Activated CD4-positive, alpha-beta memory T cell treated with anti-CD3 and anti-CD28 coated beads for 36 hours (primary cell): ENCODE measurements at regions of chr17 and their contacts with region 1.

Region 1: DNA sequence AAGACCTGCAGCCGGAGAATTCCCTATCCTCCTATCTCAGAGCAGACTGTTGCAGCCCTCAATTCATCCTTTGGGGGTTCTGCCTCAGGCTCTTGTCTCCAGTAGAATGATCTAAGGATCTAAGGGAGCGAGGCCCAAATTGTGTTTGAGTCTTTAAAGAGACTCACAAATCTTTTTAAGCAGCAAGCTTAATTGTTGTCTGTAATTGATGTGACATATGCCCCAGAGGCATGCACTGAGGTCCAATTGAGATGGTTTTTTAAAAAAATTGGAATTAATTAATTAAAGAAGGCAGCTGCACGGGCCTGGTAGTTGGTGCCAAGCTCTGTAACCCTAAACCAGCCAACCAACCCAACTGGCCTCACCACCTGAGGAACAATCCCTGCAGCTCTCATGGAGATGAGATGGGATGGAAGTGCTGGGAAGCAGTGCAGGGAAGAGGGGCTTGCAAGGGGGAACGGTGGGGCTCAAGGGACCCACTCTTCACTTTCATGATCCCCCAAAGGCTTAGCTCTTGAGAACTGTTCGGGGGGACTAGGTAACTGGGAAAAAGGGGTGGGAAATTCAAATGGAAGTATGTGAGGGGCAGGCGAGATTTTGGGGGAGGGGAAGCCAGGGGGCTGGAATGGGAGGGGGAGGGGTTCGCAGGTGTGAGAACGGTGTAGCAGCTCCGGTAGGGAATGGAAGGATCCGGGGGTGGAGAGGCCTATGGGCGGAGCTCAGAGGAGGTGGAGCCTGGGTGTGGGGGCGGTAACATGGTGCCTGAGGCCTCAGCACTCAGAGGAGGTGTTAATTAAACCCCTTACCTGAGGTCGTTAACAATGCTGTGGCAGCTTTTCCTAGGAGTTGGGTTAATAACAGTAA is 9.2 kb upstream of the ZNF652 start:
- DNase-seq: no peak
- H3K4me3 Mint-ChIP-seq: no peak overlapping the region
- H3K27ac Mint-ChIP-seq: no peak overlapping the region
- H3K4me1 Mint-ChIP-seq: peaks cover 3% of the 10 kb centered on the region
- H3K27me3 Mint-ChIP-seq: no peaks in the 10 kb centered on the region

Region 2: DNA sequence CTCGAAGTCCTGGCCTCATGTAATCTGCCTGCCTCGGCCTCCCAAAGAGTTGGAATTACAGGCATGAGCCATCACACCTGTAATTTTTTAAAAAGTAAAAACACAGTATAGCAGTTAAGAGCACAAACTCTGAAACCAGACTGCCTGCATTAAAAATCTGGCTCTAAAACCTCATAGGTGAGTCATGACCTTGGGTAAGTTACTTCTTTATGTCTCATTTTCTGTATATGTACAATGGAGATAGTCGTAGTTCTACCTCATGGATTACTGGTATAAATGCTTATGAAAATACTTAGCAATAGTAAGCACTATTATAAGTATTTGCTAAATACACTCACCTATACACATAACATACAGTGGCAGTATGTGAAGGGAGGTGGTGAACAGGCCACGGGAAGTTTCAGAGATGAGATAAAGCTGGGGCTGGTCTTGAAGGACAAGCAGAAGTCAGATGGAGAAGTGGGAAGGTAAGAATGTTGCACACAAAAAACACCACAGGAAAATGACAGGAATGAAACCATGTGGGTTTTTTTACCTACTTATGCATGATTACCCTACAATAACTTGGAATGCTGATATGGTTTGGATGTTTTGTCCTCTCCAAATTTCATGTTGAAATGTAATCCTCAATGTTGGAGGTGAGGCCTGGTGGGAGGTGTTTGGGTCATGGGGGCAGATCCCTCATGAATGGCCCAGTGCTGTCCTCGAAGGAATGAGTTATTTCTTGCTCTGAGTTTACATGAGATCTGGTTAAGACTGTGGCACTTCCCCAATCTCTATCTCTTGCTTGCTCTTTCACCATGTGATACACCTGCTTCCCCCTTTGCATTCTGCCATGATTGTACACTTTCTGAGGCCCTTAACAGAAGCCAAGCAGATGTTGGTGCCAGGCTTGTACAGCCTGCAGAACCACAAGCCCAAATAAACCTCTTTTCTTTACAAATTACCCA is 43.1 kb before region 1 on chr17:
- CTCF ChIA-PET with region 1: interaction called, 13 read pairs
- POLR2A ChIA-PET with region 1: no interaction called
- intact Hi-C with region 1: no loop called
- DNase-seq: no peak
- H3K4me3 Mint-ChIP-seq: no peak overlapping the region
- H3K27ac Mint-ChIP-seq: peak overlapping the region; percentile 49
- H3K4me1 Mint-ChIP-seq: peaks cover 38% of the 10 kb centered on the region
- H3K27me3 Mint-ChIP-seq: no peaks in the 10 kb centered on the region

Region 3: GRCh38 chr17:49337884-49338283 is 33.3 kb before region 1 on chr17:
- CTCF ChIA-PET with region 1: interaction called, 17 read pairs
- POLR2A ChIA-PET with region 1: no interaction called
- intact Hi-C with region 1: no loop called
- DNase-seq: no peak
- H3K4me3 Mint-ChIP-seq: no peak overlapping the region
- H3K27ac Mint-ChIP-seq: no peak overlapping the region
- H3K4me1 Mint-ChIP-seq: peaks cover 48% of the 10 kb centered on the region
- H3K27me3 Mint-ChIP-seq: no peaks in the 10 kb centered on the region

Region 4: GRCh38 chr17:49390548-49391324 is 19.5 kb after region 1 on chr17:
- CTCF ChIA-PET with region 1: interaction called, 20 read pairs
- POLR2A ChIA-PET with region 1: no interaction called
- intact Hi-C with region 1: no loop called
- DNase-seq: peak; percentile 33
- H3K4me3 Mint-ChIP-seq: no peak overlapping the region
- H3K27ac Mint-ChIP-seq: peak overlapping the region; percentile 71
- H3K4me1 Mint-ChIP-seq: peaks cover 53% of the 10 kb centered on the region
- H3K27me3 Mint-ChIP-seq: no peaks in the 10 kb centered on the region

Region 5: DNA sequence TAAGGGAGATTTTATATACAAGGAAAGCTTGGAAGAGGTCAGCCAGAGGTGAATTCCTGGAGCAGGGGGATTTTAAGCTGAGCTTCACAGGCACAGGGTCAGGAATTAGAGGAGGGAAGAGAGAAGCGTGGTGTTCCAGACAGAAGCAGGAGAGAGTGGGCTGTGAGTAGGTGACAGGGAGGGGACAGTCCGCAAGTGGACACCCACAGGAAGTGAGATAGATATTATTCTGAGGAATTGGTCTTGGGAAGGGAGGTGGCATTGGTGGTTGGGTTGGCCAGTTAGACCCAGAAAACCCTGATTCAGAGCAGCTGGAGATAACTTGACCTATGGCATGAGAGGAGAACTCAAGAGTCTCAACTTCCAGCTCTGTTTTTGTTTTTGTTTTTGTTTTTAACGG is 28.8 kb after region 1 on chr17:
- CTCF ChIA-PET with region 1: interaction called, 16 read pairs
- POLR2A ChIA-PET with region 1: no interaction called
- intact Hi-C with region 1: no loop called
- DNase-seq: no peak
- H3K4me3 Mint-ChIP-seq: no peak overlapping the region
- H3K27ac Mint-ChIP-seq: no peak overlapping the region
- H3K4me1 Mint-ChIP-seq: peaks cover under 1% of the 10 kb centered on the region
- H3K27me3 Mint-ChIP-seq: no peaks in the 10 kb centered on the region

Region 6: GRCh38 chr17:49851387-49852291 is 480.4 kb after region 1 on chr17:
- CTCF ChIA-PET with region 1: no interaction called
- POLR2A ChIA-PET with region 1: no interaction called
- intact Hi-C with region 1: no loop called
- DNase-seq: peak; percentile 76
- H3K4me3 Mint-ChIP-seq: peak overlapping the region; percentile 76
- H3K27ac Mint-ChIP-seq: peak overlapping the region; percentile 73
- H3K4me1 Mint-ChIP-seq: peaks cover 9% of the 10 kb centered on the region
- H3K27me3 Mint-ChIP-seq: no peaks in the 10 kb centered on the region